Testis (tissue), 5 donors: ENCODE measurements at regions of chr2 and their contacts with region 1.

Region 1: DNA sequence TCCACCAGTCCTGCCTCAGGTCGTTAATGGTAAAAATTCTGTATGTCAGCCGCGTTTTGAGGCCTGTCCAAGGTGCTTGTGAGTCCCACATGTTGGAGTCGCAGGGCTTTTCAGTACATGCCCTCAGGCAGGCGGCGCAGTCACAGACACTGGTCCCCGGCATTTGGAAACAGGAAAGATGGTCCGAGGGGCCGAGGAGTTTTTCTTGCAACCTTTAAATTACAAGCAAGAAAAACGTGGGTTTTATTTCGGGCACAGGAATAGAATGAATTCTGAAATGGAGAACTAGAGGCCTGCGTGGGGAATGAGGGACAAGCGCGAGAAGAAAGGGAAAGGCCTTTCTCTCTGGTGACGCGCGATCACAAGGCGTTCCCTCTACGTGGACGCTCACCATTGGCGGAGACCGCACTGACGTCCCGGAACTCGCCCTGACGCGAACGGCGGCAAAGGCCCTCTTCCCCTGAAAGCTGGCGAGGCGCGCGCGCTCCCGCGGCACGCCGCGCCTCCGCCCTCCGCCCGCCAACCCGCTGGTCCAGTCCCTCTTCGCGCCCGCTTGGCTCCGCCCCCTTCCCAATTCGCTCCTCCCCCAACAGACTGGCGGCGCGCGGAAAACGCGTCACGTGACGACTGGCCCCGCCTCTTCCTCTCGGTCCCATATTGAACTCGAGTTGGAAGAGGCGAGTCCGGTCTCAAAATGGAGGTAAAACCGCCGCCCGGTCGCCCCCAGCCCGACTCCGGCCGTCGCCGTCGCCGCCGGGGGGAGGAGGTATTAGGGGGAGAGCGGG is at the start of gene HNRNPA3:
- DNase-seq: peak; percentile 98
- H3K4me3 ChIP-seq: peak within 1 kb of the TSS; percentile 92 to 97
- H3K27ac ChIP-seq: peak within 1 kb of the TSS; percentile 100
- H3K4me1 ChIP-seq: peaks cover 29% of the 10 kb centered on the region
- H3K27me3 ChIP-seq: no peaks in the 10 kb centered on the region
- CTCF ChIP-seq: peak in 2 of 3 experiments; percentile 20 to 38
- POLR2A ChIP-seq: peak; percentile 41
- total RNA-seq, gene HNRNPA3: 81.3 to 103 TPM

Region 2: GRCh38 chr2:176526995-176527901 is 685.0 kb before region 1 on chr2:
- intact Hi-C with region 1: no loop called
- DNase-seq: no peak
- H3K4me3 ChIP-seq: no peak overlapping the region
- H3K27ac ChIP-seq: no peak overlapping the region
- H3K4me1 ChIP-seq: no peaks in the 10 kb centered on the region
- H3K27me3 ChIP-seq: no peaks in the 10 kb centered on the region
- CTCF ChIP-seq: no peak
- POLR2A ChIP-seq: no peak

Region 3: DNA sequence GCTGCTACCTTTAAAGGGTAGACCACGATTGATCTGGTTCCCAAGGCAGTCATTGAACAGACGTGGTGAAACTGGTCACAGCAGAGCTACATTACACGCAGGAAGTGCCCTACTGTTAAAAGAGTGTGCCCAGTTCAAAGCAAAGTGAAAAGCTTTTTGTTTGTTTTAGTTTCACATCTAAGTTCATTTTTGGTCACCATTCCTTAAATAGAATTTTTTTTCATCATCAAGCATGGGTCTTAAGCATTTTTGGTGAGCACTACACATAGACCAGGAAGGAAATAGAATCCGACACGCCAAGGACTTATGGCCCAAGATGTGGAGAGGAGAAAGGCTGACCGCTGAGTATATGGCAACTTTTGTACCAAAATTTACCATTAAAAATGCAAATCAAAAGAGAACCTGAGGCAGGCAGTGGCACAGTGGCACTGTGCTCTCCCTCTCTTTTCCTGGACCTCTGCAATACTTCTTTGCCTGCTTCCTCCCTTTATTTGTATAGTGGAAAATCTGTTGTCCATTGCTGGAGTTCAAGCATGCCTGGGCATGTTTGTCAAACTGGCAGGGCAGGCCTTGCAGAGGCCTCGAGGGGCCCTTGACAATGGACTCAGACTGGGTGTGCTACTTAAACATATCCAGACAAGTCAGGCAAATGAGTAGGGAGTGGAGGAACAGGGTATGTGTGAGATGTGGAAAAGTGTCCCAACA is 42.3 kb before region 1 on chr2:
- intact Hi-C with region 1: no loop called
- DNase-seq: no peak
- H3K4me3 ChIP-seq: no peak overlapping the region
- H3K27ac ChIP-seq: peak overlapping the region; percentile 21 to 75
- H3K4me1 ChIP-seq: peaks cover 29% of the 10 kb centered on the region
- H3K27me3 ChIP-seq: no peaks in the 10 kb centered on the region
- CTCF ChIP-seq: no peak
- POLR2A ChIP-seq: no peak

Region 4: GRCh38 chr2:177263451-177264208 is 51.3 kb after region 1 on chr2:
- intact Hi-C with region 1: loop called (anchors 5 kb)
- DNase-seq: peak; percentile 98
- H3K4me3 ChIP-seq: peak overlapping the region; percentile 99 to 100
- H3K27ac ChIP-seq: peak overlapping the region; percentile 100
- H3K4me1 ChIP-seq: peaks cover 37% of the 10 kb centered on the region
- H3K27me3 ChIP-seq: no peaks in the 10 kb centered on the region
- CTCF ChIP-seq: peak; percentile 79 to 94 (median 90)
- POLR2A ChIP-seq: no peak